ENCODE measurements at regions of chr12 and their contacts with region 1.

Region 1: DNA sequence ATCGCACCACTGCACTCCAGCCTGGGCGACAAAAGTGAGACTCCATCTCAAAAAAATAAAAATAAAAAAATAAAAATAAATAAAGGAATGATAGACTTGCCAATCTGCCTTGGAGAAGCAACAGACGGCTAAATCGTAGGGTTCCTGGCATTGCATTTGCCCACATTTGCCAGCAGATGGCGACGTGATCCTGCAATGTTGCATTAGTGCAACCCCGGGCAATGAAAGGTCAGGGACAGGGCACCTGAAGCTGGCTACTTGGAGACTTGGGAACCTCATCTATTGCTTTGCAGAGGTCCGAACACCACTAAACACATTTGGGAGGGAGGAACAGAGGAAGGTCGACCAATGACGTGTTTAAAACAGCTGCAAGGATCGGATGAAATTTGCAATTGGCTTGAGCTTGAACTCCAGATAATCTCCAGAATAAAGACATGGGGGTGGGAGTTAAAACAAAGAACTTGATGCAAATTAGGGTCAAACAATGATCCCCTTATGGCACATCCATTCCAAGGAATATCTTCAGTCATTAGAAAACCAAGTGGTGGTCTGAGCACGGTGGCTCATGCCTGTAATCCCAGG is 34.6 kb downstream of the SPRING1 start:
- DNase-seq: peak; percentile 79
- H3K4me3 ChIP-seq: no peak overlapping the region
- H3K27ac ChIP-seq: no peak overlapping the region
- H3K4me1 ChIP-seq: peaks cover 0 to 12% (median 3%) of the 10 kb centered on the region in 4 donors
- H3K27me3 ChIP-seq: peaks cover 0 to 10% (median 0%) of the 10 kb centered on the region in 3 donors
- CTCF ChIP-seq: peak; percentile 80 to 90 (median 86)
- EP300 ChIP-seq: no peak
- POLR2A ChIP-seq: no peak

Region 2: DNA sequence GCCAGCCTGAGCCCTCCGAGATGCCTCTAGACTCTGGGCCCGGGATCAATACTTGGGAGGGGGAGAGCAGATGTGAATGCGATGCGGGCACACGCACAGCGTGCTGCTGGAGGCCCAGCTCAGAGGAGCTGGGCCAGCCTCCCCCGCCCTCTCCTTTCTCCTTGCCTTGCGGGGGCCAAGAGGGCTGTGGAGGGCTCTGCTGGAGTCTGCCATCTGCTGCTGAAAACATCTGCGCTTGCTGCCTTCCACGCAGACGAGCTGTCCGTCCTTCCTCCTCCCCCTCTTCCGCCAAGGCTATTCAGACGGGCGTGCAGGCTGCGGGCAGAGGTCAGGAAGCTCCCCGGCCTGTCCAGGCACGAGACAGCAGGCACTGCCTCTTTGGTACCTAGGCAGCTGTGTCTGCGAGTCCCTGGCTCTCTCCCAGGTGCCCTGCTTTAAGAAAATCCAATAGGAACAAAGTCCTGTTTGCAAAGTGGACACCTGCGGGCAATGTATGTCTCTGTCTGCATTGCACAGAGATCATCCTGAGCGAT is 40.6 kb before region 1 on chr12:
- intact Hi-C with region 1: no loop called
- DNase-seq: no peak
- H3K4me3 ChIP-seq: no peak overlapping the region
- H3K27ac ChIP-seq: no peak overlapping the region
- H3K4me1 ChIP-seq: peaks cover 0 to 15% (median 12%) of the 10 kb centered on the region in 4 donors
- H3K27me3 ChIP-seq: no peaks in the 10 kb centered on the region
- CTCF ChIP-seq: no peak
- EP300 ChIP-seq: no peak
- POLR2A ChIP-seq: no peak

Region 3: GRCh38 chr12:116882742-116883141 is 179.4 kb after region 1 on chr12:
- intact Hi-C with region 1: loop called (anchors 2 kb)
- DNase-seq: no peak
- H3K4me3 ChIP-seq: no peak overlapping the region
- H3K27ac ChIP-seq: no peak overlapping the region
- H3K4me1 ChIP-seq: peaks cover 0 to 42% (median 37%) of the 10 kb centered on the region in 4 donors
- H3K27me3 ChIP-seq: peaks cover 38 to 80% (median 65%) of the 10 kb centered on the region in 3 donors
- CTCF ChIP-seq: no peak
- EP300 ChIP-seq: no peak
- POLR2A ChIP-seq: no peak

Measured in sigmoid colon (tissue), 7 donors.